OCI-LY7 (cell line): ENCODE measurements at regions of chr15 and their contacts with region 1.

Region 1: DNA sequence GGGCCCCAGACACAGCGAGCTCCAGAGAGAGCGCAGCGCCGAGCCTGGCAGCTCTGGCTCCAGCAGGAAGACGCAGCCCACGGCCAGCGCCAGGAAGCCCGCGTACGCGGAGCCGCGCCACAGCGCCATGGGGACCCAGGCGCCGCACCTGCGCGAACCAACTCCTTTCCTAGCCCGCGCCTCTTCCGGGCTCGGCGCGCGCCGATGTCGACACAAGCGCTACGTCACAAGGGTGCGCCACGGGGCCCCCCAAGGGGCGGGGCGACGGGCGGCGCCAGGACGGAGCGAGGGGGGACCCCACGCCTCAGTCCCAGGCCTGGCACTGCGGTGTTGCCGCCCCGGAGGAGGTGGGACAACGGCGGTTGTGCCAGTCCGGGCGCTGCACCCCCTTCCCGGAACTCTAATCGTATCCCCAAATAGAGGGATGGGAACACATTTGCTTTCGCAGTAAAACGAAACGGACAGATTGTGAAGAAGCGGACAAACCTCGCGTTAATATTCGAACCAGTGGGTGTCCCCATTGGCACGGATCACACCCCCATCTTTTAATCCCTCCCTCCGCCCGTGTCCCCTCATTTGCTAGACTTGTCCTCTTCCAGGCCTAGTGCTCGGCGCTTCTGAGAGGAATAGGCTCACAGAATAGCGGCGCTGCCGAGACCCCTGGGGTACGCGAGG is at the start of gene ADPGK:
- DNase-seq: peak; percentile 96
- H3K4me3 ChIP-seq: peak within 1 kb of the TSS; percentile 93
- H3K27ac ChIP-seq: peak within 1 kb of the TSS; percentile 50
- H3K4me1 ChIP-seq: peaks cover 22% of the 10 kb centered on the region
- CTCF ChIP-seq: no peak
- total RNA-seq, gene ADPGK: 86.8 and 112 TPM in 2 replicates

Region 2: DNA sequence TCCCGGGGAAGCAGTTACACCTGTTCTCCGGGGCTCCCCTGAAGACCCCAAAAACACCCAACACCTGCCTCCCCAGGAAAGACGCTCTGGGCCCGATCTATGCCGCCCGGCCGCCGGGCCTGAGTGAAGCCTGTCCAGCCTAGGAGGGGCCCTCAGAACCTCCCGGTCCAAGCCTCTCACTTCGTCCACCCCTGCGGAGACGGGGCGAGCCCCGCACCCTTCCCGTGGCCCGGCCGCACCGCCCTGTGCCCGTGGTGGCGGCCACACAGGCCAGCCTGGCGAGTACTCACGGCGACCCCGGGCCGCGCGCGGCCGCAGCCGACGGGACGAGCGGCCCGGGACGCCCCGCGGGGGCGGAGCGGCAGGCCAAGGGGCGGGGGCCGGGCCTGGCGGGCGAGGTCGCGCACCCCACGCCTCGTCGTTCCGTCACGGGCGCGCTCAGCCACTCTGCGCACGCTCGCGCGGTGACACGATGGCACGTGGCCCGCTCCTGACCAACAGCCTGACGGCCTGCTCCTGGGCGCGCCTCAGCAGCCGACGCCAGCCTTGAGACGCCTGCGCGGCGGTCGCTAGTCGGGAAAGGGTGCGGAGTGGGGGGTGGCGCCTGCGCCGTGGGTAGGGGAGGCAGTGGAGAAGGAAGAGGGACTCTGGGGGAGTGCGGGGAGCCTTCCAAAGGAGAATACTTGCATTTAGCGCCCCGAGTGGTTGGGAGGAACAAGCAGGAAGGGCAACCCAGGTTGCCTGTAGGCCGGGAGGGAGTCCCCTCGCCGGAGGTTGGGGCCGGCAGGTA is 511.3 kb before region 1 on chr15 and contains the start of gene PARP6:
- CTCF ChIA-PET with region 1: no interaction called
- POLR2A ChIA-PET with region 1: no interaction called
- intact Hi-C with region 1: loop called (anchors 5 kb)
- DNase-seq: peak; percentile 97
- H3K4me3 ChIP-seq: peak within 1 kb of the TSS; percentile 97
- H3K27ac ChIP-seq: peak within 1 kb of the TSS; percentile 42
- H3K4me1 ChIP-seq: peaks cover 25% of the 10 kb centered on the region
- CTCF ChIP-seq: peak; percentile 78
- total RNA-seq, gene PARP6: 53.6 and 58.3 TPM in 2 replicates

Region 3: GRCh38 chr15:72685925-72686794 is 97.5 kb before region 1 on chr15 and contains the starts of genes BBS4 and HIGD2B:
- CTCF ChIA-PET with region 1: no interaction called
- POLR2A ChIA-PET with region 1: interaction called, 3 read pairs
- intact Hi-C with region 1: loop called (anchors 5 kb)
- DNase-seq: peak; percentile 90
- H3K4me3 ChIP-seq: peak within 1 kb of the TSS; percentile 90
- H3K27ac ChIP-seq: peak within 1 kb of the TSS; percentile 85
- H3K4me1 ChIP-seq: peaks cover 30% of the 10 kb centered on the region
- CTCF ChIP-seq: no peak
- total RNA-seq, gene BBS4: 21.4 and 29.7 TPM in 2 replicates
- total RNA-seq, gene HIGD2B: 0.22 and 1.5 TPM in 2 replicates

Region 4: DNA sequence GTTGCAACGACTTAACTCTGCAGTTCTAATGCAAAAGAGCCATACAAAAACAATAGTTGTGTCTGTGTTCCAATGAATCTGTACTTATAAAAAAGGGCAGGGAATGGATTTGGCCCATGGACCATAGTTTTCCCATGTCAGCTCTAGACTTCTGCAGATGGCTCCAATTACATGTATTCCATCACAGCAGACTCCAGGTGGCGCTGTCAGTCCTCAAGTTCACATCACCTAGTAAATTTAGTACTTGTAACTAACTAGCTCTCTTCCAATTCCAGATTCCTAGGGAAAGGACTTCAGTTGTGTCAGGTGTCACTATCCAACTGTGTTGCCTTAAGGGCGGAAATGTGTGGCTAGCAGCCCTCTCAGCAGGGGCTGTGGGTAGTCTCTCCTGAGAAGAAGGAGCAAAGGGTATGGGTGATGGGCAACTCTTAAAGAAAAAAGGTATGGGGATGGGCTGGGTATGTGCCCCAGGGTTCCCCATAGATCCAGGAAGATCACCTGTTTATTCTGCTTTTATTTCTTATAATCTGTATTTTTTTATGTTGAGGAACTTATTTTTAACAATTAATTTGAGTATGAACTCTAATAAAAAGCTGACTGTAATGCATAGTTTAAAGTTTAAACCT is 61.5 kb before region 1 on chr15:
- CTCF ChIA-PET with region 1: no interaction called
- POLR2A ChIA-PET with region 1: no interaction called
- intact Hi-C with region 1: loop called (anchors 5 kb)
- DNase-seq: peak; percentile 69
- H3K4me3 ChIP-seq: no peak overlapping the region
- H3K27ac ChIP-seq: no peak overlapping the region
- H3K4me1 ChIP-seq: no peaks in the 10 kb centered on the region
- CTCF ChIP-seq: peak; percentile 96

Region 5: DNA sequence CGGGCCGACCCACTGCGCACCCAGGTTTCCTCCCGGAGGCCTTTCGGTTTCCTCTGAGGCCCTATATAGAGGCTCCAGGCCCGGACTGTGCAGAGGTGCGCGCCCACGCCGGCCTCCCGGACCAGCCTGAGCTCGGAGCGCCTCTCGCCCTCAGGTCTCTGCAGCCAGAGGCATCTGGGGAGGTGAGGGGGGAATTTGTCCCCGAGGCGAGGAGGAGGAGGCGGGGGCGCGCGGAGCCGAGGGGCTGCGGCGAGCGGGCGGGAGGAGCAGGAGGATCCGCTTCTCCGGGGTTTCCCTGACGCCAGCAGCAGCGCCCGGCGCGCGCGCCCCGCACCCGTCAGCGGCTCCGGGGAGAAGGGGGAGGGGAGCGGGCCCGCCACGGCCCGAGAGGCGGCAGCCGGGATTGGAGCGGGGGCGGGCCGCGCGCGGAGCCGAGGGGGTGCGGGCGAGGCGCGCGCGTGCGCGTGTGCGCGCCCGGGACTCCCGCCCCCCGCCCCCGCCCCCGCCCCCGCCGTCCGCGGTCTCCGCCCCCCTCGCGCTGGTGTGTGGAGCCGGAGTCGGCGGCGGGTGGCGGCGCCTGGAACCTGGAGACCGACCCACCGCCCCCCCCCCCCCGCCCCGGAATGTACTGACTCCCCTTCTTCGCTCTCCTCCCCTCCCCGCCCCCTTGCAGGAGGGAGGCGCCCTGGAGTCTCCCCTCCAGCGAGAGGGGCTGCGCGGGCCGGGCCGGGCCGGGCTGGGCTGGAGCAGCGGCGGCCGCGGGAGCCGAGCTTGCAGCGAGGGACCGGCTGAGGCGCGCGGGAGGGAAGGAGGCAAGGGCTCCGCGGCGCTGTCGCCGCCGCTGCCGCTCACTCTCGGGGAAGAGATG is 268.3 kb after region 1 on chr15 and contains the start of gene NEO1:
- CTCF ChIA-PET with region 1: no interaction called
- POLR2A ChIA-PET with region 1: no interaction called
- intact Hi-C with region 1: loop called (anchors 5 kb)
- DNase-seq: peak; percentile 73
- H3K4me3 ChIP-seq: peak within 1 kb of the TSS; percentile 76
- H3K27ac ChIP-seq: no peak within 1 kb of the TSS
- H3K4me1 ChIP-seq: peaks cover 14% of the 10 kb centered on the region
- CTCF ChIP-seq: no peak
- total RNA-seq, gene NEO1: 2.1 and 3.0 TPM in 2 replicates

Region 6: DNA sequence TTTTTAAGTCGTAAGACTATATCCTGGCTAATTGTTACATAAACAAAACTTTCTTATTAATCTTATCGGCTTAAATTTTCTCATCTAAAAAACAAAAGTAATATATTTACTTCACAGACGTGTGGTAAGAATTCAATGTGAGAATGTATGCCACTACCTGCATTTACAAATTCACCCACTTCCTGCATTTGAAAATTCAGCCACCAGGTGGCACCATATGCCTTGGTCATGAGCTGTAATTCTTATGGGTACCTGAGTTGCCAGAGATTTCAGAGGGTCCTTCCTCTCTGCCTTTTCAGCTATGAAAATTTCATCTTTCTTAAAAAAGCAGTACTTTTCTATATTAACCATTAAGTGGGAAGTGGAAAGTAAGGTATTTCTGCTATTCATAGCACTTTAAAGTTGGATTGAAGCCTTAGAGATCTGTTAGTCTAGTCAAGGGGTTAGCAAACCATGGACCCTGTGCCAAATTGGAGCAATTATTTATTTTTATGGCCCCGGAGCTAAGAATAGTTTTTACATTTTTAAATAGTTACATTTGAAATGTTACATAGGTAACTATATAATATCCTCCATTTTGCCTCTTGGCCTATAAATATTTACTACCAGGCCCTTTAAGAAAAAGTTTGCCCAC is 457.3 kb after region 1 on chr15:
- CTCF ChIA-PET with region 1: no interaction called
- POLR2A ChIA-PET with region 1: no interaction called
- intact Hi-C with region 1: no loop called
- DNase-seq: peak; percentile 67
- H3K4me3 ChIP-seq: no peak overlapping the region
- H3K27ac ChIP-seq: no peak overlapping the region
- H3K4me1 ChIP-seq: no peaks in the 10 kb centered on the region
- CTCF ChIP-seq: peak; percentile 97

Region 7: GRCh38 chr15:73633111-73633990 is 849.7 kb after region 1 on chr15 and contains the start of gene NPTN:
- CTCF ChIA-PET with region 1: no interaction called
- POLR2A ChIA-PET with region 1: no interaction called
- intact Hi-C with region 1: loop called (anchors 5 kb)
- DNase-seq: peak; percentile 98
- H3K4me3 ChIP-seq: peak within 1 kb of the TSS; percentile 96
- H3K27ac ChIP-seq: no peak within 1 kb of the TSS
- H3K4me1 ChIP-seq: peaks cover 43% of the 10 kb centered on the region
- CTCF ChIP-seq: 0 out of 2 replicates have a peak, but pooled peaks have one; percentile 11
- total RNA-seq, gene NPTN: 36.0 and 41.5 TPM in 2 replicates